ENCODE measurements at regions of chr17 and their contacts with region 1.

Region 1: GRCh38 chr17:45218895-45219661 is 2.6 kb upstream of the FMNL1 start:
- DNase-seq: peak; percentile 94
- H3K4me3 ChIP-seq: no peak overlapping the region
- H3K27ac ChIP-seq: peak overlapping the region in 2 of 8 donors; percentile 58 to 99
- H3K4me1 ChIP-seq: peaks cover 12 to 48% (median 41%) of the 10 kb centered on the region in 6 donors
- H3K27me3 ChIP-seq: peaks cover 0 to 17% (median 0%) of the 10 kb centered on the region in 7 donors
- CTCF ChIP-seq: peak; percentile 92 to 99 (median 98)
- POLR2A ChIP-seq: no peak

Region 2: DNA sequence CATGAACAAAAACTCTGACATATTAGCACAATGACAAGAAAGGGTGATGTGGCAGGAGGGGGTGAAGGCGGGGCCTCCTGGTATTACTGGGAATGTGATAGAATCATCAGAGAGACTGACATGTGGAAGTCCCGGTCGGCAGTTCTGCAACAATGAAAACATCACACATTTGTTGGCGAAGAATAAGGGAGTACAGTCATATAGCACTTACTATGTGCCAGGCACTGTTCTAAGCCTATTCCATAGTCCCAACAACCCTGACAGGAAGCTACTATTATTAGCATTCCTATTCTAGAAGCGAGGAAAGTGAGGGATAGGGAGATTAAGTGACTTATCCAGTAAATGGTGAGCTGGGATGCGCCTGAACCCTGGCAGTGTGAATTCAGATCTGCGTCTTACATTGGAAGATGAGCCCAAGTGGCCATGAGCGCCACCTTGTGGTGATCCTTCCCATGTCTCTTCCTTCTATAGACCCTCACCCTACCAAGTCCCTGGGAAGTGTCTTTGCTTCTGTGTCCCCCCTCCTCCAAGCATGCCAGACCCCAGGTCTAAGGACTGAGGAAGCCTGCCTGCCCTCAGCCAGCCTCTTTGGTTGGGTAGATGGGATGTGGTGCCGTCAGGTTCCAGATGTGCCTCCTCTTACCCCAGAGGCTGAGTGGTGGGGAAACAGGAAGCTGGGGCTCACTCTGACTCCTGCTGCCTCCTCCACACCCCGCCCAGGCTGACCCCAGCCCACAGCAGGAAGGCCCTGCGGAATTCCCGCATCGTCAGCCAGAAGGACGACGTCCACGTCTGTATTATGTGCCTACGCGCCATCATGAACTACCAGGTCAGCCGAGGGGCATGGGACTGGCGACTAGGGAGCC is 16.6 kb after region 1 on chr17:
- intact Hi-C with region 1: no loop called
- DNase-seq: peak; percentile 92
- H3K4me3 ChIP-seq: peak overlapping the region in 1 of 8 donors; percentile 13
- H3K27ac ChIP-seq: peak overlapping the region in 5 of 8 donors; percentile 16 to 99 (median 52)
- H3K4me1 ChIP-seq: peaks cover 9 to 61% (median 40%) of the 10 kb centered on the region in 6 donors
- H3K27me3 ChIP-seq: peaks cover 0 to 14% (median 2%) of the 10 kb centered on the region in 7 donors
- CTCF ChIP-seq: peak; percentile 67 to 90 (median 82)
- POLR2A ChIP-seq: no peak

Region 3: DNA sequence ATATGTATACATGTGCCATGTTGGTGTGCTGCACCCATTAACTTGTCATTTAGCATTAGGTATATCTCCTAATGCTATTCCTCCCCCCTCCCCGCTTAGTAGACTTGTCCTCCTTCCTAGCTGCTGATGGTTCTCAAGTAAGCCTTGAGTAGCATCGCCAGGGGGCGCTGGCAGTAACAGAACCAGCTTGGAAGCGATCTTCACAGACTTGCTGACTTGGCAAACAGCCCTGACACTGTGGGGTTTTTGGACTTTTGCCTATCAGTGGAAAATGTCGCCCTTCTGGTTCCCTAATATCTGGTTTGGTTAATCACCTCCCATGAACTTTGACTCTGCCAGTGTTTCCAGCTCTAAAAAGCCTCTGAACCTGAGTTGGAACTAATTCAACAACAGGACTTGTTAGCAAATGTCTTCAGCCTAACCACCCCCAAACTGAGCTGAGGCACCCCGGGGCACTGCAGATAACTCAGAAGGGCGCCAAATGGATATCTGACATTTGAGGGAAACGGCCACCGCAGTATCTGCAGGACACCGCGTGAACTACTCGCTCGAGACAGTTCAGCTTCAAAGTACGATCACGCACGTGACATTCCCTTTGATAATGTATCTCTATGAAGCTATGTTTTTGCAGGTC is 58.3 kb after region 1 on chr17:
- intact Hi-C with region 1: loop called (anchors 5 kb)
- DNase-seq: peak; percentile 97
- H3K4me3 ChIP-seq: no peak overlapping the region
- H3K27ac ChIP-seq: peak overlapping the region in 4 of 8 donors; percentile 8 to 49 (median 24)
- H3K4me1 ChIP-seq: peaks cover 6 to 20% (median 13%) of the 10 kb centered on the region in 6 donors
- H3K27me3 ChIP-seq: no peaks in the 10 kb centered on the region
- CTCF ChIP-seq: peak; percentile 80 to 94 (median 86)
- POLR2A ChIP-seq: no peak